ENCODE measurements at regions of chr11 and their contacts with region 1.

Region 1: DNA sequence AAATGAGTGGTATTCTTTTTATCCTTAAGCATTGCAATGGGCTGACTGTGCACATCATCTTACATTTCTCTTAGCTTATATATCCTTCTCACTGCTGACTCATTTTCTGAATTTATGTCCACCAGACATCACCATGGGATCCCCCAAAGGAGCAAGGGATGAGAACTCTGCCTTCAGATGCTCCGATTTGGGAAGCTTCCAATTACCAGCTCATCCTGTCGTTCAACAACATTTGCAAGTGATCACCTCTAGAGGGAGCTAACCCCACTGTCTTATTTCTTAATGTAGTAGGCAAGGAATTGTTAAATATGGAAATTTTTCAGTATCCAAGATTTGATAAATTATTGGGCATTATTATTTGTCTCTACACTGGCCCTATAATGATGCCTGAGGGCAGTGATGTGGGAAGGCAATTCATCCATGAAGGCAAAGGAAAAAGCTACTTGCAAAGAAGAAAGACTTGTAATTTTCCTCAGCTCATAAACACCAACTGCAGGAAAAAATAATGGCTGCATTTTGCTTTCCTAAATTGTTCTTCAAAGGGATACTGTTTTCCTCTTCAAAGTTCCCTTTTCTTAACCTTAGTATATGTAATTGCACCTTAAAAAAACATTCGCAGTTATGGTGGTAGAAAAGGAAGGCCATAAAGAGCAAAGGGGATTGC is 102.4 kb upstream of the FSHB start:
- DNase-seq: no peak
- H3K4me3 ChIP-seq: no peak overlapping the region
- H3K27ac ChIP-seq: no peak overlapping the region
- H3K4me1 ChIP-seq: no peaks in the 10 kb centered on the region
- H3K27me3 ChIP-seq: peaks cover 0 to 1% (median 0%) of the 10 kb centered on the region in 4 experiments; a peak in 2 of 7 replicates
- CTCF ChIP-seq: peak in 2 of 3 experiments; percentile 52 to 69; a peak in 2 of 4 replicates
- EP300 ChIP-seq: no peak
- POLR2A ChIP-seq: no peak
- RAD21 ChIP-seq: peak; percentile 53 to 56

Region 2: GRCh38 chr11:29448246-29448877 is 680.0 kb before region 1 on chr11:
- CTCF ChIA-PET with region 1: interaction called, 11 read pairs
- POLR2A ChIA-PET with region 1: no interaction called
- DNase-seq: no peak
- H3K4me3 ChIP-seq: no peak overlapping the region
- H3K27ac ChIP-seq: no peak overlapping the region
- H3K4me1 ChIP-seq: no peaks in the 10 kb centered on the region
- H3K27me3 ChIP-seq: no peaks in the 10 kb centered on the region
- CTCF ChIP-seq: peak in 2 of 3 experiments; percentile 54 to 68; a peak in 3 of 4 replicates
- EP300 ChIP-seq: no peak
- POLR2A ChIP-seq: no peak
- RAD21 ChIP-seq: peak; percentile 88 to 92

Region 3: DNA sequence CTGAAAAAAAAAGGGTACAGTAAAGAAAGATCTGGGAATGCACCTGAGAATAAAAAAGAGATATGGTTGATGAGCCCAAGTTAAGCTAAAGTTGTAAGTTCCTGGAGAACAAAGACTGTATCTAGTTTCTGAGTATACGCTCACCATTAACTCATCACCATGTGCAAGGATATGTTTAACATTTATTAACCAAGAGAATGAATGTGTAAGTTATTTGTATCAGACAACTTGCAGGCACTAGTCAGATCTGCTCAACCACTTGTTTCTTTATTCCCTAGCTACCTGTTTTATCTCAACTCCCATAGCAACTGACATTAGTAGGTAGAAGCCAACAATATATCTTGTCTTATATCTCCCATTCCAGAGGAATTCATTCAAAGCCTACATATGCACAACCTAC is 36.7 kb before region 1 on chr11:
- CTCF ChIA-PET with region 1: interaction called, 15 read pairs
- POLR2A ChIA-PET with region 1: no interaction called
- DNase-seq: no peak
- H3K4me3 ChIP-seq: no peak overlapping the region
- H3K27ac ChIP-seq: no peak overlapping the region
- H3K4me1 ChIP-seq: no peaks in the 10 kb centered on the region
- H3K27me3 ChIP-seq: no peaks in the 10 kb centered on the region; a peak in 1 of 7 replicates
- CTCF ChIP-seq: no peak
- EP300 ChIP-seq: no peak
- POLR2A ChIP-seq: no peak
- RAD21 ChIP-seq: no peak

Region 4: DNA sequence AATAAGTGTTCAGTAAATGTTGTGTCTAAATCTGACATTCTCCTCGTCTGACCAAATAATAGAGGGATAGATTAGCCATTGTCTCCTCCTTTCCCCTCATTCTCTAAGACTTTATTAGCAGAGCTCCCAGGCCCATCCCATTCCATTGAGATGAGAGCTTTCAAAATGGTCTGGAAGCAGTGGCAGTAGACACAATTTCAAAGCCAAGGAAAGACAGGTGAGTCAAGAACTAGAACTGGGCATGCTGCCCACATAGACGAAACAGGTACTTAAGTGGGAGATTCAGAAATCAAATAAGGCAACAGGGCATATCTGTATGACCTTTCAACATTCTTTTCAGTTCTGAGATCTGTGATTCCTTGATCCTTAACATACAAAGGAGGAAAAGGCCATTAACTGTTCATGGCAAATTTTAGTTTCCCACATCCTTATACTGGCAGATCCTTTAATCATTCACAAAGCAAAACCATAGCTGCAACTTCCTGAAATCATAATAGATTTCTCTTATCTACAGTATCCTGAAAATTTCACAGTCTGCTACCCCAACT is 15.0 kb before region 1 on chr11:
- CTCF ChIA-PET with region 1: interaction called, 60 read pairs
- POLR2A ChIA-PET with region 1: no interaction called
- DNase-seq: no peak
- H3K4me3 ChIP-seq: no peak overlapping the region
- H3K27ac ChIP-seq: no peak overlapping the region
- H3K4me1 ChIP-seq: no peaks in the 10 kb centered on the region
- H3K27me3 ChIP-seq: peaks cover 10 to 48% (median 29%) of the 10 kb centered on the region in 4 experiments
- CTCF ChIP-seq: no peak
- EP300 ChIP-seq: no peak
- POLR2A ChIP-seq: no peak
- RAD21 ChIP-seq: no peak

Region 5: DNA sequence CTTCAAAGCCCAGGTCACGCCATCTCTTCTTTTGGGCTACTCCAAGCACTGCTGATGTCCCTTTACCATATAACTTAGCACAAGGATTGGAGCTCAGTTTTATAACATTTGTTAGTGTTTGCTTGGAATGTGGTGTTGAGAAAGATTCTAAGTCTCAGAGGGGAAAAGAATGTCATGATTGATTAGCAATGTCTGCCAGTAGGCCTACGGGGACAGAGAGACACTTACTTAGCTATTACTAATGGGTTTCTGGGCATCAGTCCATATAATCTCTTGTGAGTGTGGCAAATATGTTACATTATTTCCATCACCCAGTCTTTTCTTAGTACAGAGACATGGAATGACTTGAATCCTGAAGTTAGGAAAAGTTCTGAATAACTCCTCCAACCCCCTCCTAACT is 27.0 kb after region 1 on chr11:
- CTCF ChIA-PET with region 1: interaction called, 54 read pairs
- POLR2A ChIA-PET with region 1: no interaction called
- DNase-seq: no peak
- H3K4me3 ChIP-seq: no peak overlapping the region
- H3K27ac ChIP-seq: no peak overlapping the region
- H3K4me1 ChIP-seq: no peaks in the 10 kb centered on the region
- H3K27me3 ChIP-seq: no peaks in the 10 kb centered on the region
- CTCF ChIP-seq: no peak
- EP300 ChIP-seq: no peak
- POLR2A ChIP-seq: no peak
- RAD21 ChIP-seq: no peak

Region 6: DNA sequence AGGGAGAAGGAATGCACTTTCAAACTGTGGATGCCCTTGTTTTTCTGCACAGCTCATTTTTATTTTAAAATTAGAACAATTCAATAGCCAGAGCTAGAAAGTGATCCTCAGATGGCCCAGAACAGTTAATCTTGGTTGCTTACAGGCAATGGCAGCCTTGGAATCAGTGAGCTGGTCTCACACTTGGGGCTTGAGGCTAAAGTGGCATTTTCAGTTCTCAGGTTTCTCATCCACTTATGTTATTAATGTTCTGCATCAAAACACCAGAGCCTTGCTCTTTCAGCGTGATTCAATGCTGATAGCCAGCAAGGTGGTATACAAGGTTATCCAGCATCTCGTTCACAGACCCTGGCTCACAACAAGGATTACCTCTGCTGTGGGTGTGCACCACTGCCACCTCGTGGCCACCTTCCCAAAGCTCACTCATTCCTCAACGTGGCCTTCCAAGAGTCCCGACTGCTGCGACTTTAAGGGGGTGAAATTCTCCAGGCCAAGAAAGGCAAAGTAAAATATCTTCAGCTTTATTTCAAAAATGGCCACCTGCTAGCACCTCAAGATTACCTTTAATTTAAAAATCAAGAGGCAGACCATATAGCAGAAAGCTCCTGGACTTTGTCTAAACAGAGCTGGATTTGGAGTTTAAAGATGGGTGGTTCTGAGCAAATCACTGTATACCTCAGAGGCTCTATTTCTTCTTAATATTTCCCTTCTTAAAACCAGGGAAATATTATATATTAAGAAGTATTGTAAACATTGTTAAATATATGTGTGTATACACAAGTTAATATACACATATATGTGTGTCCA is 68.2 kb after region 1 on chr11:
- CTCF ChIA-PET with region 1: interaction called, 29 read pairs
- POLR2A ChIA-PET with region 1: no interaction called
- DNase-seq: peak; percentile 49 to 89
- H3K4me3 ChIP-seq: no peak overlapping the region
- H3K27ac ChIP-seq: no peak overlapping the region
- H3K4me1 ChIP-seq: peaks cover 0 to 3% (median 0%) of the 10 kb centered on the region in 4 experiments; a peak in 1 of 7 replicates
- H3K27me3 ChIP-seq: no peaks in the 10 kb centered on the region
- CTCF ChIP-seq: peak; percentile 84 to 96 (median 94)
- EP300 ChIP-seq: no peak
- POLR2A ChIP-seq: no peak
- RAD21 ChIP-seq: peak; percentile 83 to 90